Calu3 (cell line): ENCODE measurements at regions of chr7 and their contacts with region 1.

Region 1: GRCh38 chr7:19294619-19295018 is 149.4 kb upstream of the FERD3L start:
- DNase-seq: no peak
- H3K4me3 Mint-ChIP-seq: no peak overlapping the region
- H3K27ac Mint-ChIP-seq: no peak overlapping the region
- H3K4me1 Mint-ChIP-seq: no peaks in the 10 kb centered on the region
- H3K27me3 Mint-ChIP-seq: peaks cover 19% of the 10 kb centered on the region
- CTCF ChIP-seq: no peak

Region 2: DNA sequence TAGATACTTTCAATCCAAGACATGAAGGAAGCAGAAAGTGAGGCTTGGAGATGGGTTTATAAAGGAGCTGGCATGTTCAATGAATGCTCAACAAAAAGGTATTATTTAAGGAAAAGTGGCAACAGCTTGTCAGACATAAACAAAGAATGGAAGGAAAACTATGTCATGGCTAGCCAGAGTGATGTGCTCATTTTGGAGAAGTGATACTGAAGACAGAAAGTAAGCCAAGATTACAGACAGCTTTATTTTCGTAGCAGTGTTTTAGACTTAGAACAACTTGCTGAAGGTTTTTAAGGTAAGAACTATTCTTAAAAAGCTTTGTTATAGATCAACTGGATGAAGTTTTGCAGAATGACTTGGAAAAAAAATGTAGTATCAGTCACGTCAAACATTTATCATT is 11.1 kb after region 1 on chr7:
- CTCF ChIA-PET with region 1: no interaction called
- intact Hi-C with region 1: no loop called
- DNase-seq: no peak
- H3K4me3 Mint-ChIP-seq: no peak overlapping the region
- H3K27ac Mint-ChIP-seq: no peak overlapping the region
- H3K4me1 Mint-ChIP-seq: no peaks in the 10 kb centered on the region
- H3K27me3 Mint-ChIP-seq: no peaks in the 10 kb centered on the region
- CTCF ChIP-seq: no peak

Region 3: GRCh38 chr7:19327018-19327417 is 32.4 kb after region 1 on chr7:
- CTCF ChIA-PET with region 1: no interaction called
- intact Hi-C with region 1: loop called (anchors 1 kb)
- DNase-seq: no peak
- H3K4me3 Mint-ChIP-seq: no peak overlapping the region
- H3K27ac Mint-ChIP-seq: no peak overlapping the region
- H3K4me1 Mint-ChIP-seq: no peaks in the 10 kb centered on the region
- H3K27me3 Mint-ChIP-seq: no peaks in the 10 kb centered on the region
- CTCF ChIP-seq: no peak